Ascending aorta (tissue), 2 donors: ENCODE measurements at regions of chr15 and their contacts with region 1.

Region 1: DNA sequence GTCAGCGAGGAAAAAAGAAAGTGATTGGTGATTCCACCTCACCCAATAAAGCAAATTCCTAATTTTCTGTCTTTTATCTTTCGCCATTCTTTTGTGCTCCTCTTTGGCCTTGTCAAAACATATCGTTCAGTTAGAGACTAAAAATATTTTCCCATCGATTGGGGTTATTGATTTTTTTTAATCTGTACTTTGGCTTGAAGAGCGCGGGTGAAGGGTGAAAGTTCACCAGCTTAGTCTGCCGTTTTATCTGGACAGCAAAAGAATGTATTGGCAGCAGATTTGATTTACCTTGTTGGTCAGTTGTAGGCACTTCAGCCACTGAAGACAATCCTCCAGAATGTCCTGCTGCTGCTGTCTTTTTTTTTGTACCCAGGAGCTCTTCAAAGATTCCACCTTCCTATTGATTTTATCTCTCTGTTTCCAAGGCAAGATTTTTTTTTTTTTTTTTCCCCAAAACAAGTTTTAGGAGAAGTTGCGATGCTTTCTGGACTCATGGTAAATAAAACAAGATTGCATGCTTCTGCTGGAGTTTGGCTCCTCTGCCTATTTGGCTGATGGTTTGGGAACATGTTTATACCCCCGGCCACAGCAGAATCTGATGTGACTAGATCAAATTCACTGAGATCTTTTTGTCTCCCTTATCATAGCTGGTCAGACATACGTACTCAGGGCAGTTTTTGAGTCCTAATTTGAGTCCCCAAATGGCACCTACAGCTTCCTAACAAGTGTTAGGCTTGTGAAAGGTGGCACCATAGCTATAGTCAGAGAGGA is 269.3 kb upstream of the ONECUT1 start:
- DNase-seq: no peak
- H3K4me3 ChIP-seq: no peak overlapping the region
- H3K27ac ChIP-seq: no peak overlapping the region
- H3K4me1 ChIP-seq: no peaks in the 10 kb centered on the region
- H3K27me3 ChIP-seq: no peaks in the 10 kb centered on the region
- CTCF ChIP-seq: no peak

Region 2: DNA sequence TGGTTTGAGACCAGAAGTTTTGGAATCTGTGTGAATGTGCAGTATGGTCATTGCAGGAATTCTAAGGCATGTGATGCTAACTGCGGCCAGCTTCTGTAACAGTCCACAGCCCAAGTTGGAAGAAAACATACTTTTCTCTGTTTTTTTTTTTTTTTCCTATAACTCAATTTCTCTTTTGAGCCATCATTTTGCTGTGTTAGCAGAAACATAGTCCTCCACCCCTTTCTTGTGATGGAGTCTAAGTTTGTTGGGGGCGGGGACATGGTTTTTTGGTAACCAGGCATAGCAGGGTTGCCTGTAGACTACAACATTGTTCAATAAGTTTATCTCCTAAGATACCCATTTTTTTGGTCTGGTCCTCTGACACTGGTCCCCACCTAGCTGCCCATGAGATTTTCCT is 46.1 kb before region 1 on chr15:
- intact Hi-C with region 1: loop called (anchors 10 kb)
- DNase-seq: no peak
- H3K4me3 ChIP-seq: no peak overlapping the region
- H3K27ac ChIP-seq: no peak overlapping the region
- H3K4me1 ChIP-seq: no peaks in the 10 kb centered on the region
- H3K27me3 ChIP-seq: no peaks in the 10 kb centered on the region
- CTCF ChIP-seq: no peak